HepG2 (cell line): ENCODE measurements at regions of chr6 and their contacts with region 1.

Region 1: DNA sequence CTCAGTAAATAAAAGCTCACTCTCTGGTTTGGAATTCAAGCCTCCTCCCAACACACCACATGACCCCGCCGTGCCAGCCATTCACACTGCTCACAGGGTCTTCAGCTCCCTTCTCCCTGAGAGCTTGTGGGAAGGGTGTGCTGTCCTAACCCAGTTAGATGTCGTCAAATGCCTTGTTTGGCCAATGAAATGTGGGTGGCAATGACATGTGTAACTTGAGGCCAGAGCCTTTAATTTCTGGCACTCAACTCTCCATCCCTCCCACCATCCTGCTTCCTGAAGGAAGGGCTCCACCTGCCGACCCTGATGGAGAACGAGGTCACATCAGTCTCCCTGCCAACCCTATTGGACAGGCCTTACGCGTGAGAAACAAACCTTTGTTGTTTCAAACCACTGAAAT is 224.5 kb upstream of the AGPAT4 start:
- DNase-seq: peak; percentile 36
- ATAC-seq: peak; percentile 95
- H3K4me3 ChIP-seq: no peak overlapping the region
- H3K27ac ChIP-seq: no peak overlapping the region
- H3K4me1 ChIP-seq: no peaks in the 10 kb centered on the region
- H3K27me3 ChIP-seq: no peaks in the 10 kb centered on the region; a peak in 2 of 5 replicates
- CTCF ChIP-seq: peak; percentile 64
- EP300 ChIP-seq: no peak
- POLR2A ChIP-seq: no peak
- RAD21 ChIP-seq: no peak

Region 2: GRCh38 chr6:161393839-161394364 is 104.5 kb before region 1 on chr6:
- CTCF ChIA-PET with region 1: interaction called, 4 read pairs
- POLR2A ChIA-PET with region 1: no interaction called
- in situ Hi-C with region 1: no loop called
- intact Hi-C with region 1: loop called (anchors 1 kb)
- DNase-seq: peak; percentile 71
- ATAC-seq: peak; percentile 97
- H3K4me3 ChIP-seq: no peak overlapping the region
- H3K27ac ChIP-seq: no peak overlapping the region
- H3K4me1 ChIP-seq: no peaks in the 10 kb centered on the region
- H3K27me3 ChIP-seq: no peaks in the 10 kb centered on the region; a peak in 2 of 5 replicates
- CTCF ChIP-seq: peak; percentile 76
- EP300 ChIP-seq: no peak
- POLR2A ChIP-seq: no peak
- RAD21 ChIP-seq: peak; percentile 60; the same call in 1 of the 2 replicates

Region 3: GRCh38 chr6:161418463-161418945 is 79.9 kb before region 1 on chr6:
- CTCF ChIA-PET with region 1: interaction called, 7 read pairs
- POLR2A ChIA-PET with region 1: no interaction called
- in situ Hi-C with region 1: no loop called
- intact Hi-C with region 1: loop called (anchors 1 kb)
- DNase-seq: peak; percentile 56
- ATAC-seq: peak; percentile 82
- H3K4me3 ChIP-seq: no peak overlapping the region
- H3K27ac ChIP-seq: no peak overlapping the region
- H3K4me1 ChIP-seq: no peaks in the 10 kb centered on the region
- H3K27me3 ChIP-seq: peaks cover 0 to 36% of the 10 kb centered on the region in 2 experiments; a peak in 3 of 5 replicates
- CTCF ChIP-seq: peak; percentile 74
- EP300 ChIP-seq: no peak
- POLR2A ChIP-seq: no peak
- RAD21 ChIP-seq: peak; percentile 50